ENCODE measurements at regions of chr11 and their contacts with region 1.

Region 1: GRCh38 chr11:111982019-111982464 is 43.2 kb upstream of the DLAT start:
- DNase-seq: peak in 4 of 5 donors; percentile 79 to 94 (median 88)
- H3K4me3 ChIP-seq: peak overlapping the region; percentile 26 to 70 (median 68)
- H3K27ac ChIP-seq: peak overlapping the region; percentile 81 to 86
- H3K4me1 ChIP-seq: peaks cover 3 to 9% (median 8%) of the 10 kb centered on the region in 3 donors
- H3K27me3 ChIP-seq: no peaks in the 10 kb centered on the region
- CTCF ChIP-seq: peak; percentile 70

Region 2: DNA sequence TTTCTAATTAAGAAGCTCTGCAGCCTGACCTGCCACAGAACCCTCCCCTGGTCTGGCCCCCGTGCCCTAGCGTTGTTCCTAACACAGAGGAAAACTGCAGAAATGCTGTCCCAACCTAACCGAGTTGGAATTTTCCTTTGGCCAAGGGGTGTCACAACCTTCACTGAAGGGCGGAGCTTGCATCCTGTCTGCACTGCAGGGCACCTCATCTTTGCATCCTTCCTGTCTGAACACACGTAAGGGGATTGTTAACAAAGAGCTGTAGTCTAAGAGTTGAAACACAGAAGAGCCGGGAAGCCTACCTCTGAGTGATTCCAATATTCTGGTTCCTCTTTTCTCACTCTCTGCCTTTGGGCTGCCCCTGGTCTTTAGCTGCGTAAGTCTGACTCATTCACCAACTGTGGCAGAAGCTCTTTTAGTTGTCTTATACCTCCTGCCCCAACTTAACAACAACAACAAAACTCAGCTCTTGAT is 43.3 kb before region 1 on chr11:
- intact Hi-C with region 1: loop called (anchors 10 kb)
- DNase-seq: peak in 1 of 5 donors; percentile 43
- H3K4me3 ChIP-seq: no peak overlapping the region
- H3K27ac ChIP-seq: no peak overlapping the region
- H3K4me1 ChIP-seq: peaks cover 10 to 12% (median 10%) of the 10 kb centered on the region in 3 donors
- H3K27me3 ChIP-seq: no peaks in the 10 kb centered on the region
- CTCF ChIP-seq: no peak

Region 3: DNA sequence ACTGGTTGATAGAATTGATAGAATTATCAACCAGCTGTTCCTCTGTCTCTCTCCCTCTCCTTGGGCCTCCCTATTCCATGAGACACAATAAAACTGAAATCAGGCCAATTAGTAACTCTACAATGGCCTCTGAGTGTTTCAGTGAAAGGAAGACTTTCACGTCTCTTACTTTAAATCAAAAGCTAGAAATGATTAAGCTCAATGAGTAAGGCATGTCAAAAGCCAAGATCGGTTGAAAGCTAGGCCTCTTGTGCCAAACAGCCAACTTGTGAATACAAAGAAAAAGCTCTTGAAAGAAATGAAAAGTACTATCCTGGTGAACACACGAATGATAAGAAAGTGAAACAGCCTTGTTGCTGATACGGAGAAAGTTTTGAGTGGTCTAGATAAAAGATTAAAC is 75.1 kb after region 1 on chr11:
- intact Hi-C with region 1: no loop called
- DNase-seq: no peak
- H3K4me3 ChIP-seq: no peak overlapping the region
- H3K27ac ChIP-seq: no peak overlapping the region
- H3K4me1 ChIP-seq: no peaks in the 10 kb centered on the region
- H3K27me3 ChIP-seq: no peaks in the 10 kb centered on the region
- CTCF ChIP-seq: no peak

Measured in kidney (tissue), 22 donors.